A673 (cell line): ENCODE measurements at regions of chr1 and their contacts with region 1.

Region 1: DNA sequence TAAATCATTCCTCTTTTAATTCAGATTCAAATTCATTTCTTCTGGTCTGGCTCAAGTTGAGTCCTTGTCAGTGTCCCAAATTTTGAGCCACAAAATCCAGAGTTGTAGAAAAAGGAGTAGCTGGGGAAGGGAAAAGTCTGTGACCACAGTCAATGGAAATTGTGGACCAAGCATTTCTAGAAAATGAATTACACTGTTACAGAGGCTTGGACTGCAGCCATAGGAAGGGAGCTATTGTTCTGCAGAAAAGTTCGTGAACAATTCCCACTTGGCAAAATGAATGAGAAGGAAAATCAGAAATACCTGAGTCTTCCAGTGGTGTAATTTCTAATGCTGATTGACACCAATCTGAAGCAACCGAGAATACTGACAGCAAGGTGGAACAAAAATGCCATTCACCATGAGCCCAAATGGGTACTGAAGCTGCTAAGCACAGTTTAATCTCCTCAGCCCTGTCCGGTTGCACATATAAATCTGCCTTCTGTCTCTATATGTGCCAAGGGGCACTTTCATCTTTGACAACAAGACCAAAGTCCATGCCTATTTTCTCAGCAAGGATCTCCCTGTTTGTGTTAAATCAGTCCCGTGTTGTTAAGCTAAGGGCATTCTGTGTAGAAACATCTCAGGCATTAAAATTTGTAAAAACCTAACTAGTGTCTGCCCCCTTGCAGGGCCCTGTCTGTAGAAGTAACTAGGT is 51.3 kb downstream of the TEX35 start:
- DNase-seq: no peak
- H3K4me3 ChIP-seq: no peak overlapping the region
- H3K27ac ChIP-seq: no peak overlapping the region
- H3K4me1 ChIP-seq: no peaks in the 10 kb centered on the region
- H3K27me3 ChIP-seq: no peaks in the 10 kb centered on the region
- CTCF ChIP-seq: no peak

Region 2: DNA sequence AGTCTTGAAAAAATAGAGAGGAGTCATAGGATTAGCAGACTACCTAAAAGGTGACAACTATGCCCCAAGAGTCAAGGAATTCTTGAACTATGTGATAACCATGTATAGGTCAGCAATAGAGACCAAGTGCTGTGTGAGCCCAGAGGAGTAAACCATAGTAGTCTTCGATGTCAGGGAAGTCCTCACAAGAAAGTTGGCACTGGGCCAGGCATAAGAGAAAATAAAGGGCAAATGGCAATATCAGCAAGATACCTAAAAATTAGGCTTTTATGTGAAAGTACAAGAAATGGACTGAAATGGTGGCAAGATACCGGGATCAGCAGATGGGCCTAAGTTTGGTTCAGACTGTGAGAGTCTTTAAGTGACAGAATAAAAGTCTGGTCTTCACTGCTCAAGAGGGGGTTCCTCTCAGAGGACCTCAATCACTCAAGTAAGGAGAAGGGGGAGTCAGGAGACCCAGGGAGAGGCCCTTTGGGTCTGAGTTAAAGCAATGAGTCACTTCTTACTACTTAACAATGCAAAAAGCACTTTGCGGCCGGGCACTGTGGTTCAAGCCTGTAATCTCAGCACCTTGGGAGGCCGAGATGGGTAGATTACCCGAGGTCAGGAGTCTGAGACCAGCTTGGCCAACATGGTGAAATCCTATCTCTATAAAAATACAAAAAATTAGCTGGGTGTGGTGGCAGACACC is 43.6 kb after region 1 on chr1:
- CTCF ChIA-PET with region 1: interaction called, 12 read pairs
- POLR2A ChIA-PET with region 1: no interaction called
- intact Hi-C with region 1: no loop called
- DNase-seq: no peak
- H3K4me3 ChIP-seq: no peak overlapping the region
- H3K27ac ChIP-seq: no peak overlapping the region
- H3K4me1 ChIP-seq: no peaks in the 10 kb centered on the region
- H3K27me3 ChIP-seq: no peaks in the 10 kb centered on the region
- CTCF ChIP-seq: no peak